Left cardiac atrium (tissue), 4 donors: ENCODE measurements at regions of chr4 and their contacts with region 1.

Region 1: DNA sequence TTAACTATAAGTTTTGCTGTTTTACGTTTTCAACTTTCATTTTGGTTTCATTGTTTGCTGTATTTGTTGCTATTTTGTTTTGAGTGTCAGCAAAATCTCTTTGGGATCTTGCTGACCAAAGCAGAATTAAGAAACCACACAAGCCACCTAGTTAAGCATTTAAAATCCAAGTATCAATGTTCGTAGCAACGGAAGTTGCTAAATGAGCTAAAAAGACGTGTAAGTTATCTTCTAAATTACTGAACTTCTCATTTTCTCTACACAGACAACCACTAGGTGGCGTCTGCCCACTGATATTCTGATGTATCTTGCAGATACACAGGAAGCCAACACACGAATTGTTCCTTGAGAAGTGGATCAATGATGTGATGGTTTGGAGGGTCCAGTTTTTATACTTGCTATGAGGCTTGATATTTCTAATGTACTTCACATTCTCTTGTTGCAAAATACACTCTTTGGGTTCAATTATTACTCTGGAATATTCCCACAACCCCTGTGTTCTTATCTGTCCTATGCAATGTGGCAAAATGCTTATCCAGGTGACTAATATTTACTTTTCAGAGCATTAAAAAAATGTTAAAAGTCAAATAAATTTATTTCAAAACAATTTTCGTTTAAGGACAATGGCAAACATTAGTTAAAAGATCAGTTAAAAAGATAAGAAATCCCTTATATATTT is 250.5 kb downstream of the TECRL start:
- DNase-seq: peak; percentile 60
- ATAC-seq: peak in 1 of 2 donors; percentile 26

Region 2: GRCh38 chr4:64105903-64106302 is 52.9 kb before region 1 on chr4:
- intact Hi-C with region 1: no loop called
- DNase-seq: no peak
- ATAC-seq: no peak

Region 3: DNA sequence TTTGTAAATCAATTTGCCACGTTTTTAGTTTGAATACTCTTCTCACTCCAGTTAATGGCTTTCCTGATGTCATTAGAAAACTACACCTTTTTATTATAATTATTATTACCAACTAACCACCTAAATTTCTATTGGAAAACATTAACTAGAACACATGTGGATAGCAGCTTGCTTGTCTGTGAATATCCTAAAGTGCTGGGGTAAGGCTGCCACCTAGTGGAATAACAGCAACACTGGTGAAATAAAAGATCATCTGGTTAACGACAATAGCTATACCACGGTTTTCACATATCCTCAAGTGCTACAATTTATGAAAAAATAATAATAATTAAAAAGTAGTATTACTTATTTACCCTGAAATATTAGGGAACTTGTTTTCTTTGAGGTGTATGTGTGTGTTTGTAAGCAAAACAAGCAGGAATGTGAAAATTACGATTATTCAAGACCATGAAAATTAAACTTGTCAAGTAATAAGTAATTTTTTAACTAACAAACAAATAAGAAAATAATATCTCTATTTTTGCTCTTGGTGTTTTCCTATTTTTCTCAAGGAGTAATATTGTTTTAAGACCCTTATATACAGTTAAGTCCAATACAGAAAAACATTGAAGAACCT is 380.6 kb after region 1 on chr4:
- intact Hi-C with region 1: loop called in 1 of 2 experiments (anchors 5 kb)
- DNase-seq: peak; percentile 20
- ATAC-seq: peak; percentile 71 to 79

Region 4: GRCh38 chr4:64584981-64585557 is 426.3 kb after region 1 on chr4:
- intact Hi-C with region 1: loop called in 1 of 2 experiments (anchors 5 kb)
- DNase-seq: peak; percentile 36
- ATAC-seq: no peak